ENCODE measurements at regions of chr20 and their contacts with region 1.

Region 1: GRCh38 chr20:54234991-54235658 is 27.2 kb downstream of the PFDN4 start:
- DNase-seq: no peak
- H3K4me3 Mint-ChIP-seq: no peak overlapping the region
- H3K27ac Mint-ChIP-seq: no peak overlapping the region
- H3K4me1 Mint-ChIP-seq: no peaks in the 10 kb centered on the region
- H3K27me3 Mint-ChIP-seq: peaks cover 16% of the 10 kb centered on the region

Region 2: DNA sequence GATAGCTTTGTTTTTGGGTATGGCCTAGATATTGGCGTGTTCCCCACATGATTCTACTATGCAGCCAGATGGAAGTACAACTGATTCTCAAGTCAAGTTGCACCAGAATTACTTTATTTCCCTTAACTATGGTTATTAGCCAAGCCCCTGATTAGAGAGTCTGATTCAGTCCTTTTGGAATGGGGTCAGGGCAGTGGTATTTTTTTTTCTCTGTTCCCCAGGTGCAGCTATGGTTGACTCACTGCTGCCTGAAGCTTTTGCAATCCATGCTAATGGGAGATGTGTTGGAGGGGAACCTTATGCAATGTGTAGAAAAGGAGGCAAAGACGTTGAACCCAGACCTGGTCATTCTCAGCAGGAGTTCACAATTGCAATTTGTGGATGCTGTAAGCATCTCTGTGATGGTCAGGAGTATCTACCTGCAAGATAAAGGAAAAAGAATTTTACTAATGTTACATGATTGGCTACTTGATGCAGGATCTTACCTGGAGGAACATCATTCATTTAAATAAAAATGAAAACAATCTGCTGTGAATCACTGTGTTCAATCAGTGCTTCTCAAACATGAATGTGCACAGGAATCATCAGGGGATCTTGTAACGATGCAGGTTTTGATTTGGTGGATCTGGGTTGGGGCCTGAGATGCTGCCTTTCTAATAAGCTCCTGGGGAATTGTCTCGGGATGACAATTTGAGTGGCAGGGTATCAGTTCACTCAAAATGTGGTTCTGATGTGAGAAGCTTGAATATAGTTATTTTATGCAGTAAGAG is 22.1 kb after region 1 on chr20:
- CTCF ChIA-PET with region 1: no interaction called
- POLR2A ChIA-PET with region 1: interaction called, 10 read pairs
- DNase-seq: no peak
- H3K4me3 Mint-ChIP-seq: no peak overlapping the region
- H3K27ac Mint-ChIP-seq: no peak overlapping the region
- H3K4me1 Mint-ChIP-seq: no peaks in the 10 kb centered on the region
- H3K27me3 Mint-ChIP-seq: peaks cover 3% of the 10 kb centered on the region